Prostate gland (tissue), 2 donors: ENCODE measurements at regions of chr2 and their contacts with region 1.

Region 1: GRCh38 chr2:205680067-205680466 is 2.2 kb upstream of the NRP2 start:
- DNase-seq: no peak
- H3K4me3 ChIP-seq: no peak overlapping the region
- H3K27ac ChIP-seq: no peak overlapping the region
- H3K4me1 ChIP-seq: no peaks in the 10 kb centered on the region
- H3K27me3 ChIP-seq: no peaks in the 10 kb centered on the region
- CTCF ChIP-seq: peak in 3 of 4 experiments; percentile 46 to 59 (median 57)
- POLR2A ChIP-seq: no peak

Region 2: GRCh38 chr2:204110338-204110741 is 1569.7 kb before region 1 on chr2:
- intact Hi-C with region 1: loop called (anchors 10 kb)
- DNase-seq: no peak
- H3K4me3 ChIP-seq: no peak overlapping the region
- H3K27ac ChIP-seq: no peak overlapping the region
- H3K4me1 ChIP-seq: peaks cover 6% of the 10 kb centered on the region
- H3K27me3 ChIP-seq: no peaks in the 10 kb centered on the region
- CTCF ChIP-seq: no peak
- POLR2A ChIP-seq: no peak

Region 3: GRCh38 chr2:204260162-204260877 is 1419.7 kb before region 1 on chr2:
- intact Hi-C with region 1: loop called (anchors 5 kb)
- DNase-seq: peak; percentile 26
- H3K4me3 ChIP-seq: no peak overlapping the region
- H3K27ac ChIP-seq: no peak overlapping the region
- H3K4me1 ChIP-seq: no peaks in the 10 kb centered on the region
- H3K27me3 ChIP-seq: no peaks in the 10 kb centered on the region
- CTCF ChIP-seq: peak; percentile 28 to 68 (median 62)
- POLR2A ChIP-seq: no peak

Region 4: GRCh38 chr2:204871231-204871953 is 808.7 kb before region 1 on chr2:
- intact Hi-C with region 1: loop called (anchors 10 kb)
- DNase-seq: no peak
- H3K4me3 ChIP-seq: no peak overlapping the region
- H3K27ac ChIP-seq: no peak overlapping the region
- H3K4me1 ChIP-seq: no peaks in the 10 kb centered on the region
- H3K27me3 ChIP-seq: no peaks in the 10 kb centered on the region
- CTCF ChIP-seq: peak in 2 of 4 experiments; percentile 18 to 30
- POLR2A ChIP-seq: no peak

Region 5: GRCh38 chr2:205845446-205845845 is 165.4 kb after region 1 on chr2:
- intact Hi-C with region 1: no loop called
- DNase-seq: no peak
- H3K4me3 ChIP-seq: no peak overlapping the region
- H3K27ac ChIP-seq: no peak overlapping the region
- H3K4me1 ChIP-seq: no peaks in the 10 kb centered on the region
- H3K27me3 ChIP-seq: no peaks in the 10 kb centered on the region
- CTCF ChIP-seq: no peak
- POLR2A ChIP-seq: no peak

Region 6: GRCh38 chr2:205925373-205926337 is 245.6 kb after region 1 on chr2:
- intact Hi-C with region 1: loop called (anchors 5 kb)
- DNase-seq: peak; percentile 70
- H3K4me3 ChIP-seq: no peak overlapping the region
- H3K27ac ChIP-seq: peak overlapping the region in 1 of 2 donors; percentile 42
- H3K4me1 ChIP-seq: no peaks in the 10 kb centered on the region
- H3K27me3 ChIP-seq: no peaks in the 10 kb centered on the region
- CTCF ChIP-seq: peak; percentile 81 to 93 (median 92)
- POLR2A ChIP-seq: no peak